Adrenal gland (tissue), 19 donors: ENCODE measurements at regions of chr3 and their contacts with region 1.

Region 1: GRCh38 chr3:47324278-47324865 is 41.6 kb downstream of the KLHL18 start:
- DNase-seq: peak; percentile 71 to 89 (median 77)
- H3K4me3 ChIP-seq: no peak overlapping the region
- H3K27ac ChIP-seq: no peak overlapping the region
- H3K4me1 ChIP-seq: peaks cover 3 to 13% of the 10 kb centered on the region in 2 donors
- H3K27me3 ChIP-seq: no peaks in the 10 kb centered on the region
- CTCF ChIP-seq: peak; percentile 57 to 81 (median 77)
- POLR2A ChIP-seq: no peak

Region 2: GRCh38 chr3:47009225-47010110 is 314.9 kb before region 1 on chr3:
- intact Hi-C with region 1: loop called in 1 of 2 experiments (anchors 10 kb)
- DNase-seq: peak; percentile 90 to 95 (median 93)
- H3K4me3 ChIP-seq: peak overlapping the region in 2 of 4 donors; percentile 30 to 54
- H3K27ac ChIP-seq: peak overlapping the region; percentile 40 to 86 (median 79)
- H3K4me1 ChIP-seq: peaks cover 9 to 12% of the 10 kb centered on the region in 2 donors
- H3K27me3 ChIP-seq: no peaks in the 10 kb centered on the region
- CTCF ChIP-seq: no peak
- POLR2A ChIP-seq: peak; percentile 57 to 89

Region 3: GRCh38 chr3:47243419-47244147 is 80.8 kb before region 1 on chr3:
- intact Hi-C with region 1: loop called in 1 of 2 experiments (anchors 10 kb)
- DNase-seq: no peak
- H3K4me3 ChIP-seq: no peak overlapping the region
- H3K27ac ChIP-seq: no peak overlapping the region
- H3K4me1 ChIP-seq: no peaks in the 10 kb centered on the region
- H3K27me3 ChIP-seq: no peaks in the 10 kb centered on the region
- CTCF ChIP-seq: no peak
- POLR2A ChIP-seq: no peak

Region 4: GRCh38 chr3:47266709-47267489 is 57.5 kb before region 1 on chr3:
- intact Hi-C with region 1: loop called in 1 of 2 experiments (anchors 10 kb)
- DNase-seq: peak; percentile 43 to 89 (median 79)
- H3K4me3 ChIP-seq: no peak overlapping the region
- H3K27ac ChIP-seq: no peak overlapping the region
- H3K4me1 ChIP-seq: peaks cover 0 to 6% of the 10 kb centered on the region in 2 donors
- H3K27me3 ChIP-seq: no peaks in the 10 kb centered on the region
- CTCF ChIP-seq: no peak
- POLR2A ChIP-seq: no peak

Region 5: DNA sequence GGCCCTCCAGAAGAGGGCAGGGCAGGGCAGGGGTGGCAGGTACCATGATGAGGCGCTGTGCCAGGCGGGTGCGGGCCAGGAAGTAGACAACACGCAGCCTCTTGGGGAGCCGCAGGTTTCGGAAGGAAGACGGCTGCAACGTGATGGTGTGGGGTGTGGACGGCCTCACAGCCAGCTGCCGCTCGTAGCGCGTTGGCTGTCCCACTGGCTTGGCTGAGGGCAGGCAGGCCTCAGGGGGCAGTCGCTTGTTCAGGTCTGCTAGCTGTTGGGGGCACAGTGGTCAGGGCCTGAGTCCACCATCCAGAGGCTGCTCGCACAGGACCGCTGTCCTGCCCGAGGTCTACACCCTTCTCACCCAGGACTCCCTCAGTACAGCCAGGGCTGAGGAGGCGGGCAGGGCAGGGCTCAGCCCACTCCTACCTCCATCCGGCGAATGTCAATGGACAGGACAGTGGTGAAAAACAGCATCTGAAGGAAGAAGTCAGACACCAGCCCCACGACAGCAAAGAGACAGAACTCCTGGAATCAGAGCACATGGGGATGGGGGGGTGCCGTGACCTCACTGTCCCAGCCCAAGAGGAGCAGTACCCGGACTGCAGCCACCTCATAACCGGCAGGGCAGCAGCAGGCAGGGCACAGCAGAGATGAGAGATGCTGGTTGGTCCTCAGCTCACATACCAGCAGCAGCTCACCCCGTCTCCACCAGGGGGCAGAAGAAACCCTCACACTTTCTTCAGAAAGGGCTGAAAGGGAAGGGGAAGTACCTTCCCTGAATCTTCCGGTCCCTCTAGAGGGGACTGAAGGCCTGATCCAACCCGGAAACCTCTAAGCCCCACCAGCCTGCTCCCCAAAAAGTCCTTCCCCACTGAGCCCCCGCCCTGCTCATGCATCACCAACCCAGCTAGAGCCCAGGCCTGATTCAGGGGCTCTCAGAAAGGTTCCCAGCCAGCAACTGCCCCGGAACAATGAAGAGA is 96.4 kb after region 1 on chr3:
- intact Hi-C with region 1: no loop called
- DNase-seq: peak; percentile 87 to 97 (median 93)
- H3K4me3 ChIP-seq: no peak overlapping the region
- H3K27ac ChIP-seq: peak overlapping the region; percentile 49 to 78 (median 66)
- H3K4me1 ChIP-seq: peaks cover 9 to 18% of the 10 kb centered on the region in 2 donors
- H3K27me3 ChIP-seq: no peaks in the 10 kb centered on the region
- CTCF ChIP-seq: peak; percentile 89 to 98 (median 96)
- POLR2A ChIP-seq: no peak